ENCODE measurements at regions of chr1 and their contacts with region 1.

Region 1: DNA sequence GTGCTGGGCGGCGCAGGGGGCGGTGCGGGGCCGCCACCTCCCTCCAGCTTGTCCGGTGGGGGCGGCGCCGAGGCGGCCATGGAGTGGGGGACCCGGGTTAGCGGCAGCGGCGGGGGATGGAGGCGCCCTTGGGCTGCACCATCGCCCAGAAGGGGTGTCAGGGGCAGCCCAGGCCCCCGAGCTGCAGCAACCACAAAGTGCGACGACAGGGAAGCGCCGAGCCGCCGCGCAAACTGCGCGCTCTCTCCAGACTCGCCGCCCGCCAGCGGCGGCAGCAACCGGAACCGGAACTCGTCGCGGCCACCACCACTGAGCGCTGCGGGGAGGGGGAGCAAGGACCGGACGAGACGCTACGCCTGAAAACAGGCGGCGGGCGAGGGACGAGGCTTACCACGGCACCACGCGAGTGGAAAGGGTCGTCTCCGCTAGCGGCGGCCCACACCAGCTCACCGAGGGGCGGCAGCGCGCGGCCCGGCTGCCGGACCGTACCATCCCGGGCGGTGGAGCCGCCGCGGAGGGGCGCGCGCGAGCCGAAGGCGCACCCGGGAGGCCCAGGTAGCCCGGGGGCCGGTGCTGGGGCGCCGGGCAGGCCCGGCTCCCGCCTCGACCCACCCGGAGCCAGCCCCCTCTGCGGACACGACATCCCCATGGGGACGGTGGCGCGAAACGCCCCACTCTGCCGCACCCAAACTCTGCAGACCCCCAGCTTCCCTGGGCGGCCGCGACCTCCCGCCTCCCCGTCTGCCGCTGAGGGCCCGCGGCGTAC is at the start of gene PYGO2:
- DNase-seq: peak; percentile 72 to 87
- H3K4me3 ChIP-seq: peak within 1 kb of the TSS; percentile 96
- H3K4me1 ChIP-seq: peaks cover 6% of the 10 kb centered on the region
- H3K27me3 ChIP-seq: no peaks in the 10 kb centered on the region

Region 2: DNA sequence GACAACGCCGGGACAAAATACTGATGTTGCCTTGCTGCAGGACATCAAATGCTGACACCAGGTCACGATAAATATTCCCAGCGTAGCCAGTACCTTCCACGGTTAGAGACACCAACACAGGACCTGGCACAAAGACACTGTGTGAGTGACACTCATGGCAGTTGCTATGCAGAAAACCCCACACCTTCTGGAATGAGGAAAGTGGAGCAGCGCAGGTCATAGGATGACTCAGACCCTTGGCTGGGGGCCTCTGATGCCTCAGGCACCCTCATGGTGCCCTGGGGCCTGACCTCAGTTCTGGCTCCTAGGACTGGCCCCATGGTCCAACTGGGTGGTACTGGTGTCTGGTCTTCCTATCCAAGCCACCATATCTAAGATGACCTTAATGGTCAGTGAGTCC is 64.9 kb after region 1 on chr1:
- in situ Hi-C with region 1: no loop called
- DNase-seq: no peak
- H3K4me3 ChIP-seq: no peak overlapping the region
- H3K4me1 ChIP-seq: no peaks in the 10 kb centered on the region
- H3K27me3 ChIP-seq: no peaks in the 10 kb centered on the region

Region 3: DNA sequence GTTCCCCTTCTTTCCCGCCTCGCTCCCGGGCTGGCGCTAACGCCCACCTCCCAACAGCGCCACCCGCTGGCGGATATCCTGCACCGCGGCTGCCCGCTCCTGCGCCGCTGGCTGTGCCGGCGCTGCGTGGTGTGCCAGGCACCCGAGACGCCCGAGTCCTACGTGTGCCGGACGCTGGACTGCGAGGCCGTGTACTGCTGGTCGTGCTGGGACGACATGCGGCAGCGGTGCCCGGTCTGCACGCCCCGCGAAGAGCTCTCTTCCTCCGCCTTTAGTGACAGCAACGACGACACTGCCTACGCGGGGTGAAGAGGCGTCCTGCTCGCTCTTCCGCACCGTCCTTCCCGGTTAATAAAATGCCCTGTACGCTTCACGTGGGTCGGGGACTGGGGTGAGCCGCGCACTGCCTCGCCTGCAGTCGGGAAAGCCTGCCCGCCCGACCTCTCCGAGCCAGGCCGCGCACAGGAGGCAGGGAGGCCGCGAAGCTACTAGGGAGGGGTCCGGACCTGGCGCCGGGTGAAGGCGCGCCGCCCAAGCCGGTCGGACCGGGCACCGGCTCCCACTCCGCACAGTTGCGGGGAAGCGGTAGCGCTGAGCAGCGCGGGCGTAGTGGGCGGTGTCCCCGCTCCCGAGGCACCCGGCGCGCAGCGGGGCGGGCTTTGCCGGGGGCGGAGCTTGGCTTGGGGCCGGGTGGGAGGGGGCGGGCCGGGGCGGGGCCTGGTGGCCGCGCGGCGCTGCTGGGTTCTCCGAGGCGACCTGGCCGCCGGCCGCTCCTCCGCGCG is 89.1 kb after region 1 on chr1 and contains the start of gene ADAM15:
- in situ Hi-C with region 1: loop called (anchors 5 kb)
- DNase-seq: peak; percentile 70 to 90
- H3K4me3 ChIP-seq: peak within 1 kb of the TSS; percentile 81
- H3K4me1 ChIP-seq: peaks cover 25% of the 10 kb centered on the region
- H3K27me3 ChIP-seq: no peaks in the 10 kb centered on the region